Calu3 (cell line): ENCODE measurements at regions of chr2 and their contacts with region 1.

Region 1: GRCh38 chr2:86011449-86011941 is 94.2 kb downstream of the POLR1A start:
- DNase-seq: no peak
- H3K4me3 Mint-ChIP-seq: no peak overlapping the region
- H3K27ac Mint-ChIP-seq: no peak overlapping the region
- H3K4me1 Mint-ChIP-seq: no peaks in the 10 kb centered on the region
- H3K27me3 Mint-ChIP-seq: peaks cover 15% of the 10 kb centered on the region
- CTCF ChIP-seq: no peak

Region 2: GRCh38 chr2:85942346-85942957 is 69.0 kb before region 1 on chr2:
- CTCF ChIA-PET with region 1: no interaction called
- intact Hi-C with region 1: no loop called
- DNase-seq: no peak
- H3K4me3 Mint-ChIP-seq: no peak overlapping the region
- H3K27ac Mint-ChIP-seq: no peak overlapping the region
- H3K4me1 Mint-ChIP-seq: no peaks in the 10 kb centered on the region
- H3K27me3 Mint-ChIP-seq: peaks cover 13% of the 10 kb centered on the region
- CTCF ChIP-seq: no peak

Region 3: DNA sequence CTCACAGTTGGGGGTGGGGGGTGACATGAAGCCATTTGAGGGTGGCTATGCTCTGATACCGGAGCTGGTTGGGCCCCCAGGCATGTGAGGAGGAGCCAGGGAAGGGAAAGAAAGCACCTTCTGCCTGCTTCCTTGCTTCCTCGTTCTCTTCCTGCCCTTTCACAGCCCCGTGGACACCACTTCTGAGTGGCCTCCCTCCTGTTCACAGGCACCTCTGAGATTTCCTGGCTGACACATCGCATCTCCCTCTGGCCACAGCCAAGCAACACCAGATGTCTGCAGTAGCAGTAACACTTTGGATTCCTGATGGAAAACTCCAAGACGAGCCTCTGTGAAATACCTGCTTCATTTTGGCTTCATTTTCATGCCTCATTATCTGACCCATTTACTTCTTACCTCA is 58.0 kb before region 1 on chr2:
- CTCF ChIA-PET with region 1: no interaction called
- intact Hi-C with region 1: loop called (anchors 2 kb)
- DNase-seq: no peak
- H3K4me3 Mint-ChIP-seq: no peak overlapping the region
- H3K27ac Mint-ChIP-seq: no peak overlapping the region
- H3K4me1 Mint-ChIP-seq: peaks cover 47% of the 10 kb centered on the region
- H3K27me3 Mint-ChIP-seq: no peaks in the 10 kb centered on the region
- CTCF ChIP-seq: no peak

Region 4: DNA sequence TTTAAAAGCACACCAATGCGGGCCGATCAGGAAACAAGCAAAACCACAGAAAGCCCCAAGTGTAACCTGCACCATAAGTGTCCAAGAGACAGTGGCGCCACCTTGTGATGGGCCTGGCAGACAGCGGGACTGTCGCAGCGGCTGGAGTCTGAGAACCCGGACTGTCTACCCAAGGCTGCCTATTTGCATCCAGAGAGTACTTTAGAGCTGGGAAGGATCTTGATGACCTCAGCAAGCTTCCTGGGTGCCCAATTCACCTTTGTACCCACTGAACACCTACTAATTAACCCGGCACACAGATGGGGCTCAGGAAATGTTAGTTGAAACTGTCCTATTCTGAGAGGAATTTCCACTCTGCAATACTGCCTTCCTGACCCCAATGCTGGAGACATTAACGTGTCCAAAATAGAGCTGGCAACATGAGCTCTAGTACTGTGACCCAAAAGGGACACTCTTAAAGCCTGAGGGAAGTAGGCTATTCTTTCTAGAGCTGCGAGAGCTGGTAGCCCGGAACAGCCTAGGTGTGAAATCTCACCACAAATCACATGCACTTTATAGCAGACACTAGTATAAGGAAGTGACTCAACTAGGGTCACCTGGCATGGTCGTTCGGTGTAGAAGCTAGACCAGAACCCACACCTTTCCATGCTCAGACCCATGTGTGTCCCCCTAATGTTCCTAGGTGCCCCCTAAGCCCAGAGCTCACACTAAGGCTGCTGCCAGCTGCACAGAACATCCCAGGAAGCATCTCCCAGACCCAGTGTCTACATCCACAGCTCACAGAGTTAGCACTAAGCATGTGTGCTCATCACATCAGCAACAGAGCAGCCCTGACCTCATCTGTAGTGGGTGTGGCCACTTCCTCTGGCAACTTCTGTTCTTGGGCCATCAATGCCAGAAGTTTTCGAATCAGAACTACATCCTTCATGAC is 68.8 kb after region 1 on chr2:
- CTCF ChIA-PET with region 1: no interaction called
- intact Hi-C with region 1: no loop called
- DNase-seq: peak; percentile 77
- H3K4me3 Mint-ChIP-seq: no peak overlapping the region
- H3K27ac Mint-ChIP-seq: no peak overlapping the region
- H3K4me1 Mint-ChIP-seq: no peaks in the 10 kb centered on the region
- H3K27me3 Mint-ChIP-seq: no peaks in the 10 kb centered on the region
- CTCF ChIP-seq: peak; percentile 71